ENCODE measurements at regions of chr6 and their contacts with region 1.

Region 1: DNA sequence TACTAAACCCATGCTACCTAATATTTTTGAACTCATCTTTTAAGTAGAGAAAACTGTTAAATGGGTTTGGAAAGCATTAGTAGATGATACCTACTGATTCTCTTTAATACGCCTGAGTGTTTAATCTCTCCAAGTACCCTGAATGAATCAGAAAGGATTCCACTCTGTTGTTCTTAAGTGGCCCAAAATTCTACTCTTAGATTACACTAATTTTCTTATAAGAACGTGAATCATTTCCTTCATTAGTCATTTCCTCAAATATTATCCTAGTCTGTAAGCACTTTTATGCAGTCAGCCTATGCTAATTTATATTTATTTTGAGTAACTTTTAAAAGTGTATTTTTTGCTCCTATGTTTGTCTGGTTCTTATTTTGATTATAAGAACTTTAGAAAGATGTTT is 380.0 kb downstream of the BTBD9 start:
- DNase-seq: no peak
- ATAC-seq: no peak
- H3K4me3 ChIP-seq: no peak overlapping the region
- H3K27ac ChIP-seq: no peak overlapping the region; the same call in 1 of the 2 replicates
- H3K4me1 ChIP-seq: peaks cover 31% of the 10 kb centered on the region
- H3K27me3 ChIP-seq: no peaks in the 10 kb centered on the region
- CTCF ChIP-seq: no peak

Region 2: GRCh38 chr6:38279420-38279819 is 19.7 kb after region 1 on chr6:
- CTCF ChIA-PET with region 1: no interaction called
- POLR2A ChIA-PET with region 1: no interaction called
- in situ Hi-C with region 1: no loop called
- intact Hi-C with region 1: no loop called
- DNase-seq: no peak
- ATAC-seq: no peak
- H3K4me3 ChIP-seq: no peak overlapping the region
- H3K27ac ChIP-seq: no peak overlapping the region
- H3K4me1 ChIP-seq: no peaks in the 10 kb centered on the region; the same call in 1 of the 2 replicates
- H3K27me3 ChIP-seq: no peaks in the 10 kb centered on the region
- CTCF ChIP-seq: peak; percentile 34

Region 3: GRCh38 chr6:38387971-38388370 is 128.2 kb after region 1 on chr6:
- CTCF ChIA-PET with region 1: interaction called, 4 read pairs
- POLR2A ChIA-PET with region 1: interaction called, 16 read pairs
- in situ Hi-C with region 1: no loop called
- intact Hi-C with region 1: no loop called
- DNase-seq: no peak
- ATAC-seq: no peak
- H3K4me3 ChIP-seq: no peak overlapping the region
- H3K27ac ChIP-seq: no peak overlapping the region
- H3K4me1 ChIP-seq: no peaks in the 10 kb centered on the region
- H3K27me3 ChIP-seq: no peaks in the 10 kb centered on the region
- CTCF ChIP-seq: no peak

Region 4: GRCh38 chr6:38588631-38589366 is 329.1 kb after region 1 on chr6:
- CTCF ChIA-PET with region 1: no interaction called
- POLR2A ChIA-PET with region 1: no interaction called
- in situ Hi-C with region 1: no loop called
- intact Hi-C with region 1: no loop called
- DNase-seq: no peak
- ATAC-seq: no peak
- H3K4me3 ChIP-seq: no peak overlapping the region
- H3K27ac ChIP-seq: no peak overlapping the region
- H3K4me1 ChIP-seq: no peaks in the 10 kb centered on the region
- H3K27me3 ChIP-seq: no peaks in the 10 kb centered on the region
- CTCF ChIP-seq: no peak

Measured in Panc1 (cell line).